ENCODE measurements at regions of chr7 and their contacts with region 1.

Region 1: DNA sequence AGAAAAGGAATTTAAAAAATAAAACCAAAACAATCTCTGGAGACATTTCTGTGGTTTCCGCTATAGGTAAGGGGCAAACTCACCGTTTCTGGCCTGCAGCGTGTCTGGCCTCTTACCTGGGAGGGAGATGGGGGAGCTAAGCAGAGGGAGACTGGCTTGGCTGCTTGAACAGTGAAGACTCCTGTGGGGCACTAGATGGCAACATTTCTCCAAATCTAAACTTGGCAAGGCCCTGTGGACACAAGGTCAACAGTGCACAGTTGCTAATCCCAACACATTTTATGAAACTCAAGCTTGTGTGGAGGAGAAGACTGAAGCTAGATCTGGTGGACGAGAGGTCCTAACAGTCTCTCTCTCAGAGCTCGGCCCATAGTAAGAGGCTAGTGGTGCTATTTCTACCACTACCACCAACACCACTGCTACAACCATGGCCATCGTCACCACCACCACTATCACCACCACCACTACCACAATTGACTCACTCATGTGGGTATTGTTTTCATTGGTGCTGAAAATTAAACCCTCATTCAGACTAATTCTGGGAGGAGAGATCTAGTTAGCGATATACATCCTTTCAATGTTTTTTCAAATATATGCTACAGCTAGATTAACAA is 28.4 kb upstream of the CDHR3 start:
- DNase-seq: peak; percentile 64
- ATAC-seq: peak; percentile 99
- H3K4me3 ChIP-seq: no peak overlapping the region
- H3K27ac ChIP-seq: no peak overlapping the region
- H3K4me1 ChIP-seq: peaks cover 11% of the 10 kb centered on the region
- H3K27me3 ChIP-seq: no peaks in the 10 kb centered on the region
- CTCF ChIP-seq: peak; percentile 72
- EP300 ChIP-seq: no peak
- POLR2A ChIP-seq: no peak
- RAD21 ChIP-seq: peak; percentile 75

Region 2: GRCh38 chr7:106009403-106010226 is 74.9 kb after region 1 on chr7:
- CTCF ChIA-PET with region 1: interaction called, 3 read pairs
- POLR2A ChIA-PET with region 1: no interaction called
- in situ Hi-C with region 1: no loop called
- intact Hi-C with region 1: loop called (anchors 2 kb)
- DNase-seq: no peak
- ATAC-seq: peak; percentile 95
- H3K4me3 ChIP-seq: no peak overlapping the region
- H3K27ac ChIP-seq: no peak overlapping the region
- H3K4me1 ChIP-seq: peaks cover 10% of the 10 kb centered on the region; the same call in 1 of the 2 replicates
- H3K27me3 ChIP-seq: no peaks in the 10 kb centered on the region
- CTCF ChIP-seq: peak; percentile 86
- EP300 ChIP-seq: no peak
- POLR2A ChIP-seq: no peak
- RAD21 ChIP-seq: peak; percentile 83

Region 3: DNA sequence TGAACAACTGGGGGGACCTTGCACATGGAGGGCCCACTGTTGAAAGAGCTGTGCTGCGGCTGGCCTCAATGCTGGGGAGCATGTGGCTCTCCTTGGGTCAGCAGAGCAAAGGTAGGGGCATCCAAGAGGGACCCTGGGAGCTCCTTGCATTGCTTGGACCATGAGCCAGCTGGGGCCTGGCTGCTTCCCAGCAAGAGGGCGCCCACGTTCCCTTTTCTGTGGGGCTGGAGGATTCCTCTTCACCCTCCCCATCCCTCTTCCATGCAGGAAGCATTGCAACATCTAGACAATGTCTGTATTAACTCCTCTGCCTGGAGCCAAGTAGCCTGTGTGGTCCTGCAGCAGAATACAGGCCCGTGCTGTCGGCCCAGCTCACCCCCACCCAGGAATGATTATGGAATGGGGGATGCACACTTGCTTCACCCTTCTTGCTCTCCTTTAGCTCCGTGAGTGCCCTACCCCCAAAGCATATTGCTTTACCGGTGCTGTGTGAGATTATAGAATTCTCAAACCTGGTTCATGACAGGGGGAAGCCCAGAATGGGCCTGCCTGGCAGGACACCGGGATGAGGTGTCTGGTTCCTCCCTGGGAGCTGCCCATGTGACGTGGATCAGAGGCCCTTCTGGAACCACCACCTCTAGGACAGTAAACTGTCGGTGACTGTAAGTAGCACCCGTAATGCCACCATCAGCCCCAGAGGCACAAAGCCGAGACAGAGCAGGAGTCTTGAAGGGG is 115.5 kb after region 1 on chr7:
- CTCF ChIA-PET with region 1: no interaction called
- POLR2A ChIA-PET with region 1: no interaction called
- in situ Hi-C with region 1: no loop called
- intact Hi-C with region 1: no loop called
- DNase-seq: peak; percentile 79
- ATAC-seq: peak; percentile 96
- H3K4me3 ChIP-seq: peak overlapping the region in 1 of 3 experiments; percentile 26; a peak in 1 of 6 replicates
- H3K27ac ChIP-seq: no peak overlapping the region
- H3K4me1 ChIP-seq: peaks cover 17% of the 10 kb centered on the region
- H3K27me3 ChIP-seq: peaks cover 0 to 25% of the 10 kb centered on the region in 2 experiments
- CTCF ChIP-seq: peak; percentile 81
- EP300 ChIP-seq: no peak
- POLR2A ChIP-seq: no peak
- RAD21 ChIP-seq: peak; percentile 66

Region 4: DNA sequence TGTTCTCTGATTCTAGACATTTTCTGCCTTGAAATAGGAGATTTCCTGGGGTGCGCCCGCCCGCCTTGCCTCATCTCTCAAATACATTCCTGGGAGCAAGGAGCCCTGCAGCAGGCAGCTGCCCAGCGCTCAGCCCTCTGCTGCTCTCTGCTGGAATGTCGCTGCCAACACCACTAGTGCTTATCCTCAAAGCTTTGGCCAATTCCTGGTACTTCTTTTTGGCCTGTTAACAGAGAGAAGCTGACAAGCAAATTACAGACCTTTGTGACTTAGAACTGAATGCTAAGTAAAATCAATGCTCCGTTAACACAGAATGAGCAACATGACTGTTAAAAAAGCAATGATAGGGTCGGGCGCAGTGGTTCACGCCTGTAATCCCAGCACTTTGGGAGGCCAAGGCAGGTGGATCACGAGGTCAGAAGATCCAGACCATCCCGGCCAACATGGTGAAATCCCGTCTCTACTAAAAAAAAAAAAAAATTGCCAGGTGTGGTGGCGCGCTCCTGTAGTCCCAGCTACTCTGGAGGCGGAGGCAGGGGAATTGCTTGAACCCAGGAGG is 219.3 kb after region 1 on chr7:
- CTCF ChIA-PET with region 1: interaction called, 3 read pairs
- POLR2A ChIA-PET with region 1: no interaction called
- in situ Hi-C with region 1: no loop called
- intact Hi-C with region 1: loop called (anchors 10 kb)
- DNase-seq: peak; percentile 54
- ATAC-seq: peak; percentile 98
- H3K4me3 ChIP-seq: no peak overlapping the region
- H3K27ac ChIP-seq: no peak overlapping the region
- H3K4me1 ChIP-seq: peaks cover 13% of the 10 kb centered on the region
- H3K27me3 ChIP-seq: peaks cover 2 to 19% of the 10 kb centered on the region in 2 experiments; a peak in 3 of 5 replicates
- CTCF ChIP-seq: peak; percentile 95
- EP300 ChIP-seq: no peak
- POLR2A ChIP-seq: no peak
- RAD21 ChIP-seq: peak; percentile 93

Region 5: DNA sequence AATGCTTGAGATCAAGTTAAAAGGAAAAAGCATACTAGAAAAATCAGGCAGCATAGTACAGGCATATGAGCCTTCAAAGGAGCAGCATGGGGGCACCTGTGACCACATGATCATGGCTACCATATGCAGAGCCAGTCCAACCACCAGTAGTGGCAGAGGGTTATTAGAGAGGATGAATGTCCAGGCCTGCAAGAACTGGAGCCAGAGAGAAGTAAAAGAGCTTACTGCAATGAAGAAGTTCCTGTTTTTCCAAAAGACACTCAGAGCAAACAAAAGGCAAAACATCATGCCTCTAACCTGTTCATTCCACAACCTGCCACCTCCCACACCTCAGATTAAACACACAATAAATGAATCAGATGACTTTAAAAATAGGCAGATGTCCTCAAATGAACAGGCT is 449.7 kb after region 1 on chr7:
- CTCF ChIA-PET with region 1: no interaction called
- POLR2A ChIA-PET with region 1: no interaction called
- in situ Hi-C with region 1: no loop called
- intact Hi-C with region 1: no loop called
- DNase-seq: no peak
- ATAC-seq: no peak
- H3K4me3 ChIP-seq: no peak overlapping the region
- H3K27ac ChIP-seq: no peak overlapping the region
- H3K4me1 ChIP-seq: no peaks in the 10 kb centered on the region
- H3K27me3 ChIP-seq: peaks cover 0 to 9% of the 10 kb centered on the region in 2 experiments; a peak in 2 of 5 replicates
- CTCF ChIP-seq: no peak
- EP300 ChIP-seq: no peak
- POLR2A ChIP-seq: no peak
- RAD21 ChIP-seq: no peak

Measured in HepG2 (cell line).